Ascending aorta (tissue), 2 donors: ENCODE measurements at regions of chr4 and their contacts with region 1.

Region 1: GRCh38 chr4:153466081-153466948 is at the start of gene TMEM131L:
- DNase-seq: peak in 1 of 2 donors; percentile 79
- H3K4me3 ChIP-seq: peak within 1 kb of the TSS; percentile 73 to 99
- H3K27ac ChIP-seq: peak within 1 kb of the TSS; percentile 68 to 81
- H3K4me1 ChIP-seq: peaks cover 3 to 13% of the 10 kb centered on the region in 2 donors
- H3K27me3 ChIP-seq: no peaks in the 10 kb centered on the region
- CTCF ChIP-seq: peak in 2 of 3 experiments; percentile 16 to 33
- total RNA-seq, gene TMEM131L: 6.9 TPM

Region 2: DNA sequence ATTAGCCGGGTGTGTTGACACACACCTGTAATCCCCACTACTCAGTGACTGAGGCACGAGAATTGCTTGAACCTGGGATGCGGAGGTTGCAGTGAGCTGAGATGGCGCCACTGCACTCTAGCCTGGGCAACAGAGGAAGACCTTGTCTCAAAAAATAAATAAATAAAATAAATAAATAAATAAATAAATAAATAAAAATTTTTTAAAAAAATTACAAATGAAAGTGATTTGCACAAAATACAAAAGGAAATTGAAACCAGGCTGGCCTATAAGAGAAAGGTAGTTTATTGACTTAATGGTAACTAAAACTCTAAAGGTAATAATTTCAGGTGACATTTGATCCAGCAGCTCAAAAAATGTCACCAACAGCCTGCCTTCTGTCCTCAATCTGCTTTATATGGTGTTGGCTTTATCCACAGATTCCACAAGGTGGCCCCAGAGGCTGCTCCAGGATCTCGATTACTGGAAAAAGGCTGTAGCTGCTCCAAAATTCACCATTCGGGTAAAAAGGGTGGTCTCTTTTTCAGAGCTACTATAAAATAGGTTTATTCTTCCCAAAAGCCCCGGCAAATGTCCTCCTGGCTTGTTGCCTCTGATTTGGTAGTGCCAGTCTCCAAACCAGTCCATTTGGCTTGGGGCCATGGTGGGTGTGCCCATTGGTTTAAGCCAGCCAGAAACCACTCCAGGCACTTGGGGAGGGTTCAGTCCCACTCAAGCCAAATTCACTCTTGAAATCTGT is 323.4 kb before region 1 on chr4:
- intact Hi-C with region 1: loop called (anchors 10 kb)
- DNase-seq: peak in 1 of 2 donors; percentile 82
- H3K4me3 ChIP-seq: peak overlapping the region in 1 of 2 donors; percentile 40
- H3K27ac ChIP-seq: no peak overlapping the region
- H3K4me1 ChIP-seq: no peaks in the 10 kb centered on the region
- H3K27me3 ChIP-seq: no peaks in the 10 kb centered on the region
- CTCF ChIP-seq: peak; percentile 71 to 89 (median 81)

Region 3: GRCh38 chr4:153426207-153426885 is 40.0 kb before region 1 on chr4:
- intact Hi-C with region 1: no loop called
- DNase-seq: no peak
- H3K4me3 ChIP-seq: no peak overlapping the region
- H3K27ac ChIP-seq: no peak overlapping the region
- H3K4me1 ChIP-seq: peaks cover 0 to 11% of the 10 kb centered on the region in 2 donors
- H3K27me3 ChIP-seq: no peaks in the 10 kb centered on the region
- CTCF ChIP-seq: no peak

Region 4: DNA sequence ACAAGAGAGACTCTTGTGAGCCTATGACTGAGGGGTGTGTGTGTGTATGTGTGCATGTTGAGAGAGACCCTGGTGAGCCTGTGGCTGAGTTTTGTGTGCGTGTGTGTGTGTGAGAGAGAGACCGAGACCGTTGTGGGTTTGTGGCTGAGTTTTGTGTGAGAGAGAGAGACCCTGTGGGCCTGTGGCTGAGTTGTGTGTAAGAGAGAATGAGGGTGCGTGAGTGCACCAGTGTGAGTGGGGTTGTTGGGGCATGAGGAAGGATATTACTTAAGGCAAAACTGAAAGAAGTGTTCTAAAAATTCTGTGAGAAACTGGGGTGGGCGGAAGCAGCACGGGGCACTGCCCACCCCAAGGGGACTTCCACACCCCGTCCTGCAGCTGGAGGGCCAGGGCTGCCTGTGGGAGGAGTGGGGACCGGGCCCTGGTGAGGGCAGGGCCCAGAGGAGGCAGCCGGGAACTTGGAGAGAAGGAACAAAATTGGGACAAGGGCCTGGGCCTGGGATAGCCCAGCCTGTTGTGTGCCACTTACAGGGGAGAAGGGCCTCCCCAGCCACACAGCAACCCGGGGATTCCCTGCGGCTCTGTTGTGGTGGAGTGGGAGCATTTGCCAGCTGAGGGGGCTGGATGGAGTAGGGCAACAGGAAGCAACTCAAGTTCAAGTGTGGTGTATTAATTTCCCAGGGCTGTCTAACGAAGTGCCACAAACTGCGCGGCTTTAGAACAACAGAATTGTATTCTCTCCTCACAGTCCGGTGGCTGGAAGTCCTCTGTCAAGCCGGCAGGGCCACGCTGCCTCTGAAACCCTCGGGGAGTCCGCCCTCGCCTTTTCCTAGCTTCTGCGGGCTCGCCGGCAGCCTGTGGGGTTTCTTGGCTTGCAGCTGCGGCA is 21.9 kb after region 1 on chr4:
- intact Hi-C with region 1: loop called (anchors 1 kb)
- DNase-seq: peak in 1 of 2 donors; percentile 70
- H3K4me3 ChIP-seq: peak overlapping the region; percentile 14 to 47
- H3K27ac ChIP-seq: peak overlapping the region; percentile 88 to 90
- H3K4me1 ChIP-seq: peaks cover 21 to 34% of the 10 kb centered on the region in 2 donors
- H3K27me3 ChIP-seq: no peaks in the 10 kb centered on the region
- CTCF ChIP-seq: no peak

Region 5: GRCh38 chr4:153535772-153536513 is 69.6 kb after region 1 on chr4:
- intact Hi-C with region 1: loop called (anchors 5 kb)
- DNase-seq: no peak
- H3K4me3 ChIP-seq: no peak overlapping the region
- H3K27ac ChIP-seq: no peak overlapping the region
- H3K4me1 ChIP-seq: peaks cover 5 to 20% of the 10 kb centered on the region in 2 donors
- H3K27me3 ChIP-seq: no peaks in the 10 kb centered on the region
- CTCF ChIP-seq: no peak

Region 6: GRCh38 chr4:153573881-153574802 is 107.8 kb after region 1 on chr4:
- intact Hi-C with region 1: loop called (anchors 1 kb)
- DNase-seq: peak in 1 of 2 donors; percentile 83
- H3K4me3 ChIP-seq: no peak overlapping the region
- H3K27ac ChIP-seq: no peak overlapping the region
- H3K4me1 ChIP-seq: peaks cover 3 to 10% of the 10 kb centered on the region in 2 donors
- H3K27me3 ChIP-seq: no peaks in the 10 kb centered on the region
- CTCF ChIP-seq: peak; percentile 63 to 79 (median 63)

Region 7: DNA sequence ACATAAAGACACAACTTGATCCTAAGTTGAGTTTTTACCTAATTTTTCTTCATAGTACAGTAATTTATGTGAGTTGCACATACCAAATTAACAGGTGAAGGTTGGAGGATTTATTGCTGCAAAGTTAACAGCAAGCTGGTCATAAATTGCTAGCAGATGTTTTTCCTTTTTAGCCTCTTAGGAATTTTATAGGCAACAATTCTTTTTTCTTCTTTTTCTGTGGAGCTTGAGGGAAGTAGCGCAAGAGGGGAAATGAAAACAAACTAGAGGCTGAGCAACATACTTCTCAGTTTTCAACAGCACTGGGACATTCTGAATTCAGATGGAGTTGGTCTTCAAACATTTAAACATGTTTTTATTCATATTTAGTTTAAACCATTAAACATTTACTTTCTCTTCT is 154.0 kb after region 1 on chr4:
- intact Hi-C with region 1: no loop called
- DNase-seq: no peak
- H3K4me3 ChIP-seq: no peak overlapping the region
- H3K27ac ChIP-seq: no peak overlapping the region
- H3K4me1 ChIP-seq: no peaks in the 10 kb centered on the region
- H3K27me3 ChIP-seq: no peaks in the 10 kb centered on the region
- CTCF ChIP-seq: no peak